A673 (cell line): ENCODE measurements at regions of chr15 and their contacts with region 1.

Region 1: GRCh38 chr15:72796515-72797337 is 13.2 kb upstream of the ADPGK start:
- DNase-seq: peak; percentile 71
- H3K4me3 ChIP-seq: peak overlapping the region; percentile 49
- H3K27ac ChIP-seq: no peak overlapping the region
- H3K4me1 ChIP-seq: peaks cover 3% of the 10 kb centered on the region
- H3K27me3 ChIP-seq: no peaks in the 10 kb centered on the region
- CTCF ChIP-seq: peak; percentile 56; the same call in 1 of the 2 replicates

Region 2: GRCh38 chr15:72890043-72890442 is 93.3 kb after region 1 on chr15:
- CTCF ChIA-PET with region 1: no interaction called
- POLR2A ChIA-PET with region 1: interaction called, 27 read pairs
- intact Hi-C with region 1: no loop called
- DNase-seq: peak; percentile 4
- H3K4me3 ChIP-seq: no peak overlapping the region
- H3K27ac ChIP-seq: no peak overlapping the region
- H3K4me1 ChIP-seq: no peaks in the 10 kb centered on the region
- H3K27me3 ChIP-seq: no peaks in the 10 kb centered on the region
- CTCF ChIP-seq: no peak

Region 3: DNA sequence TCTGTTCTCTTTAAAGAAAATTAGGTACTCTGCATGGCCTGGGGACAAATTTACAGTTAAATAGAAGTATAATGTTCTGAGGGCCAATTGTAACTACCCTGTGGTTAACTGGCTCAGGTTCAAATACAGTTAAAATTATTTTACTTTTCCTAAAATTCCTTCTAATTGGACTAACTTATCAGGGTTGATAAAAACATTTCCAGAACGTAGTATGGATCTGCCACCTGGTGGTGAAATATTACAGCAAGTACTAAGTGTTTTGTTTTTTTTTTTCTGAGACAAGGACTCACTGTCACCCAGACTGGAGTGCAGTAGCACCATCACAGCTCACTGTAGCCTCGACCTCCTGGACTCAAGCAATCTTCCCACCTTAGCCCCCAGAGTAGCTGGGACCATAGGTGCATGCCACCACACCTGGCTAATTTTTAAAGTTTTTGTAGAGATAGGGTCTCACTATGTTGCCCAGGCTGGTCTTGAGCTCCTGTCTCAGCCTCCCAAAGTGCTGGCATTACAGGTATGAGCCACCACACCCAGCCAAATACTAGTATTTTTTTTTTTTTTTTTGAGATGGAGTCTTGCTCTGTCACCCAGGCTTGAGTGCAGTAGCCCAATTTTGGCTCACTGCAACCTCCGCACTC is 284.7 kb after region 1 on chr15:
- CTCF ChIA-PET with region 1: interaction called, 4 read pairs
- POLR2A ChIA-PET with region 1: no interaction called
- intact Hi-C with region 1: loop called (anchors 2 kb)
- DNase-seq: peak; percentile 73
- H3K4me3 ChIP-seq: no peak overlapping the region
- H3K27ac ChIP-seq: no peak overlapping the region
- H3K4me1 ChIP-seq: peaks cover 43% of the 10 kb centered on the region
- H3K27me3 ChIP-seq: no peaks in the 10 kb centered on the region
- CTCF ChIP-seq: peak; percentile 72